Left lung (tissue), 14 donors: ENCODE measurements at regions of chr7 and their contacts with region 1.

Region 1: DNA sequence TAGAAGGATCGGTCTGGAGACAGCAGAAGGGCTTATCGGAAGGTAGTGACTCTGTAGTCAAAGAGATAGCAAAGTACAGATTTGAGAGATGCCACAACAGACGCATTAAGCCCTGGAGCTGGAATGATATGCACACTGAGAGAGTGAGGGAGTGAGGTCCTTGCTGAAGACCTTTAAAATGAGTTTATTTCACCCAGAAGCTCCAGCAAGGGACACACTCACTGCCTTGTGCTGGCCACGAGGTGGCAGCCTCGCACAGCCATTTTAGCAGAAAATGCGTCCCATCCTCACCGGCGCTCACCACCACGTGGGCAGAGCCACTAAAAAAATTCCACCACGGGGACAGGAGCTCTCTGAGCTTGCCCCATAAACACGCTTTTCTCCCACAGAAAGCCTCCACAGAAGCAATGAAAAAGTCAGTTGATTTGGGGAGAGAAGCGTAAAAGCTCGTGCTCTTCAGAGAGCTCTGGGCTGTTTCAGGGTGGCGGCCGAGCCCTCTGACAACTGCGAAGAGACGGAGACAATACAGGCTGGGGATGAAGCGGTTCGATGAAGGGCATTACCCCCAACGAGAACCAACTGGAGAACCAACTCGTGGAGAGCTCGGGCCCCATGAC is 163.0 kb upstream of the KLF14 start:
- DNase-seq: peak; percentile 59 to 89 (median 82)
- ATAC-seq: peak; percentile 49
- H3K4me3 ChIP-seq: no peak overlapping the region
- H3K27ac ChIP-seq: peak overlapping the region; percentile 49 to 78
- H3K4me1 ChIP-seq: peaks cover 31 to 95% of the 10 kb centered on the region in 2 donors
- H3K27me3 ChIP-seq: no peaks in the 10 kb centered on the region
- CTCF ChIP-seq: peak; percentile 75 to 84

Region 2: DNA sequence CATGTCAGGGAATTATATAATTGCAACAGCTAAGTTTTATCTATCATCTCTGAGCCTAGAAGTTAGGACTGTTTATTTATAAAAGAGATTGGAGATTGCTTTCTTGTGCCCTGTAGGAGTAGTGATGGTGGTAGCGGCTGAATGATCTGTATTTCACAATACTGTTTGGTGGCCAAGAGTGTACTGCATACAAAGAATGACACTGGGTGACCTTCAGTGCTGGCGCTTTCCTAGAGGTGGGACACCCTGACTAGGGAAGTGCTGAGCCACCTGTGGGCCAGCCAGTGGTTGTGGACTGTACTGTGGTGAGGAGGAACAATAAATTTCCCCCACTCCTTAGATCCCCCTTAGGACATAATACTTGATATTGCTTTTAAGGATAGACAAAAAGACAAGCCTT is 281.4 kb before region 1 on chr7:
- intact Hi-C with region 1: no loop called
- DNase-seq: no peak
- ATAC-seq: no peak
- H3K4me3 ChIP-seq: no peak overlapping the region
- H3K27ac ChIP-seq: no peak overlapping the region
- H3K4me1 ChIP-seq: no peaks in the 10 kb centered on the region
- H3K27me3 ChIP-seq: no peaks in the 10 kb centered on the region
- CTCF ChIP-seq: no peak

Region 3: GRCh38 chr7:131011976-131012375 is 115.0 kb after region 1 on chr7:
- intact Hi-C with region 1: loop called in 1 of 2 experiments (anchors 10 kb)
- DNase-seq: peak in 2 of 4 donors; percentile 45 to 78
- ATAC-seq: peak; percentile 45
- H3K4me3 ChIP-seq: no peak overlapping the region
- H3K27ac ChIP-seq: peak overlapping the region; percentile 73 to 79
- H3K4me1 ChIP-seq: peaks cover 60 to 98% of the 10 kb centered on the region in 2 donors
- H3K27me3 ChIP-seq: no peaks in the 10 kb centered on the region
- CTCF ChIP-seq: no peak

Region 4: GRCh38 chr7:131040467-131040932 is 143.5 kb after region 1 on chr7:
- intact Hi-C with region 1: loop called in 1 of 2 experiments (anchors 5 kb)
- DNase-seq: peak in 2 of 4 donors; percentile 55 to 70
- ATAC-seq: peak; percentile 92
- H3K4me3 ChIP-seq: no peak overlapping the region
- H3K27ac ChIP-seq: peak overlapping the region; percentile 35 to 40
- H3K4me1 ChIP-seq: peaks cover 19 to 45% of the 10 kb centered on the region in 2 donors
- H3K27me3 ChIP-seq: no peaks in the 10 kb centered on the region
- CTCF ChIP-seq: peak; percentile 81 to 85

Region 5: DNA sequence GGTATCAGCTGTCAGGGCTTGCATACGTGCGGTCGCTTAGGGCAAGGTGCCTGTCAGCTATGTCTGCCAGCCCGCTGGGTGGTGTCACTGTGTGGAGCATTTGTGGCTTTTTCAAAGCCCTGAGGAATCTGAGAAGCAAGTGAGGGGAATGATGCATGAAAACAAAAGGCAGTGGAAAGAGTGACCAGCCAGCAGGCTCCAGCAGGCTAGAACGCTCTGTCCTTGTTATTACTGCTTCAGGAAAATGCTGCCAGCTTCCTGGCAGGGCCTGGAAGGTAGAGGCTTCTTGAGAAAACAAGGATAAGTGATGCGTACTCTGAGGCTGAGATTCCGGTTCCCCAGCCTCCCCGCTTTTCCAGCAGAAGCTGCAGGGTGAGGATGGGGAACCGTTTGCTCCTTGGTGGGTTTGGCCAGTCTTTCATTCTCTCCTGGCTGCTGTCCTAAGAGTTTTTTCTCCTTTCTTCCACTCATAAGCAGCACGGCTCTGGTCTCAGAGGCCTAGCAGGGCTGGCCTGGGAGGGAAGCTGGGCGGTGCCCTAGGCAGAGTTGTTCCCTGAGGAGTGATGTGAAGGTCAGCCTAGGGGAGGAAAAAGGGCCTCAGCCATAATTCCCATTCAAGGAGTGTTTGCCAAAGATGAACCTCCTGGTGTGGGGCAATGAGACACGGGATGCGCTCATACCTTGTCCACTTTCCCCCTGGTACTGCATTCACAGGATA is 387.9 kb after region 1 on chr7:
- intact Hi-C with region 1: no loop called
- DNase-seq: no peak
- ATAC-seq: peak; percentile 59
- H3K4me3 ChIP-seq: no peak overlapping the region
- H3K27ac ChIP-seq: peak overlapping the region in 1 of 2 donors; percentile 6
- H3K4me1 ChIP-seq: no peaks in the 10 kb centered on the region
- H3K27me3 ChIP-seq: no peaks in the 10 kb centered on the region
- CTCF ChIP-seq: no peak

Region 6: DNA sequence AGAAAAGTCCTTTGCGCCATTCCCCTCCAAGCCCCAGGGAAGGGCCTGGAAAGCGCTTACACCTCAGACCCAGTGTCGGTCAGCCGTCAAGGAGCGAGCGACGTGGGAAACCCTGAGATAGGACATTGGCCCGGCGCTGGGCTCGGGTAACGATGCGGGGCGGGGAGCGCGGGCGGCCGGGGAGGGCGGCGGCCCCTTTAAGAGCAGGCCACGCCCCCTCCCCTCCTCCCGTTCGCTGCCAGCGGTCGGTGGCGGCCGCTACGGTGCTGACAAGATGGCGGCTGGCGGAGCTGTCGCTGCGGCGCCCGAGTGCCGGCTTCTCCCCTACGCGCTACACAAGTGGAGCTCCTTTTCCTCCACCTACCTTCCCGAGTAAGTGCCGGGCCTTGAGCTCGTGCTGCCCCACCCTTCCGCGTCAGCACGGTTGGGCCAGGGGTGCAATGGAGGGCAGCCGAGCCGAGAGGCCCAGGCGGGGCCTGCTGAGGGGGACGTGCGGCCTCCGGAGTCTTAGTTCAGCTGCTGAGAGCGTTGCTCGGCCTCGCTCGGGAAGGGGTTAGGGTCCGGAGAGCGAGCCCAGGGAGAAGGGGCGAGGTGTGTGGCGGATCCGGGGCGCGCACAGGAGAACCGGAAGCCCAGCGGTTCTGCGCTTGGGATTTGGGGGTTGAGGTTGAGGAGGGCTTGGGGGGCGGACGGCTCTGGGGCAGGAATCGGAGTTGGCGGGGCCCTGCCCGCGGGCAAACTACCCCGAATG is 430.8 kb after region 1 on chr7 and contains the start of gene MKLN1:
- intact Hi-C with region 1: no loop called
- DNase-seq: peak; percentile 86 to 99 (median 94)
- ATAC-seq: peak; percentile 99
- H3K4me3 ChIP-seq: peak within 1 kb of the TSS; percentile 71 to 76
- H3K27ac ChIP-seq: peak within 1 kb of the TSS; percentile 97
- H3K4me1 ChIP-seq: peaks cover 6 to 51% of the 10 kb centered on the region in 2 donors
- H3K27me3 ChIP-seq: no peaks in the 10 kb centered on the region
- CTCF ChIP-seq: no peak
- polyA plus RNA-seq, gene MKLN1: 38.7 to 48.2 (median 42.8) TPM